ENCODE measurements at regions of chr5 and their contacts with region 1.

Region 1: GRCh38 chr5:162817364-162817763 is 620.0 kb upstream of the CCNG1 start:
- DNase-seq: no peak
- ATAC-seq: no peak
- H3K4me3 ChIP-seq: no peak overlapping the region
- H3K27ac ChIP-seq: no peak overlapping the region
- H3K4me1 ChIP-seq: no peaks in the 10 kb centered on the region
- H3K27me3 ChIP-seq: no peaks in the 10 kb centered on the region
- CTCF ChIP-seq: no peak
- EP300 ChIP-seq: no peak
- POLR2A ChIP-seq: no peak
- RAD21 ChIP-seq: no peak

Region 2: DNA sequence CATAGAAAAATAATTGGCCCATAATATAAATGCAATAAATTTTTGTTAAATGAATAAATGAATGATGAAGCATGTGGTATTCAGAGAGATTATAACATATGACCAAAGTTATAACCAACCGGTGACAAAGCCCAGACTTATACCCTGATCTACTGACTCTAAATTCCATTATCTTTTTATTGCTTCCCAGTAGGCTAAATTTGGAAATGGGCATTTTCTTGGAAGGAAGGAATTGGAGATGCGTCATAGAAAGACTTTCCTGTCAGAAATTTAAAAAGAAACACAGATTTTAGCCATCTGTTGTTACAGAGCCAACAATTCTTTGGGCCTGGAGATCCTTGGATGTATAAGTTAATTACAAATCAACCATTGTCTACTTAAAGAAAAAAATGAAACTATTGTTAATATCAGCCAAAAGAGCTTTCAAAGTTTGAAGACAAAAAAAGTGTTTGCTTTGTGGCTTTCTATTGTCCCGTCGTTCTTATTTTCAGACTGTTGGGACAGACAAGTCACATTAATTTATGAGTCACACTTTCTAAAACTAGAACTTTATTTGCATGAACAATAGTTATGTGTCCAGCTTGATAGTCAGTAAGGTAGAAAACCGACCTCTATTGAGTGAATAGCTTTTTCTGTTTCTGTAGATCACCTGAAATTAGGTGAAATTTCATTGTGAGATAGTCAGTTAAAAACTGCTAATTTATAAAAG is 321.1 kb before region 1 on chr5:
- CTCF ChIA-PET with region 1: no interaction called
- POLR2A ChIA-PET with region 1: no interaction called
- RAD21 ChIA-PET with region 1: no interaction called
- SMC1A ChIA-PET with region 1: no interaction called
- in situ Hi-C with region 1: no loop called
- intact Hi-C with region 1: no loop called
- DNase-seq: no peak
- ATAC-seq: peak; percentile 90
- H3K4me3 ChIP-seq: no peak overlapping the region
- H3K27ac ChIP-seq: no peak overlapping the region
- H3K4me1 ChIP-seq: no peaks in the 10 kb centered on the region
- H3K27me3 ChIP-seq: no peaks in the 10 kb centered on the region
- CTCF ChIP-seq: no peak
- EP300 ChIP-seq: peak; percentile 19 to 39; a peak in 2 of 4 replicates
- POLR2A ChIP-seq: no peak
- RAD21 ChIP-seq: no peak

Region 3: GRCh38 chr5:162806195-162806594 is 11.2 kb before region 1 on chr5:
- CTCF ChIA-PET with region 1: interaction called, 3 read pairs
- POLR2A ChIA-PET with region 1: no interaction called
- RAD21 ChIA-PET with region 1: no interaction called
- SMC1A ChIA-PET with region 1: interaction called, 10 read pairs
- in situ Hi-C with region 1: no loop called
- intact Hi-C with region 1: no loop called
- DNase-seq: no peak
- ATAC-seq: no peak
- H3K4me3 ChIP-seq: no peak overlapping the region
- H3K27ac ChIP-seq: no peak overlapping the region
- H3K4me1 ChIP-seq: no peaks in the 10 kb centered on the region
- H3K27me3 ChIP-seq: no peaks in the 10 kb centered on the region
- CTCF ChIP-seq: no peak
- EP300 ChIP-seq: no peak
- POLR2A ChIP-seq: no peak
- RAD21 ChIP-seq: no peak